ENCODE measurements at regions of chr10 and their contacts with region 1.

Region 1: GRCh38 chr10:91006001-91006751 is 85.3 kb upstream of the ANKRD1 start:
- DNase-seq: peak; percentile 34 to 84 (median 55)
- ATAC-seq: peak; percentile 92
- H3K4me3 ChIP-seq: no peak overlapping the region
- H3K4me3 Mint-ChIP-seq: peak overlapping the region; percentile 47
- H3K27ac ChIP-seq: no peak overlapping the region
- H3K27ac Mint-ChIP-seq: peak overlapping the region; percentile 13
- H3K4me1 ChIP-seq: peaks cover 8% of the 10 kb centered on the region
- H3K4me1 Mint-ChIP-seq: peaks cover 12% of the 10 kb centered on the region
- H3K27me3 ChIP-seq: no peaks in the 10 kb centered on the region
- H3K27me3 Mint-ChIP-seq: no peaks in the 10 kb centered on the region
- CTCF ChIP-seq: peak; percentile 92

Region 2: GRCh38 chr10:90798482-90798881 is 207.7 kb before region 1 on chr10:
- CTCF ChIA-PET with region 1: no interaction called
- POLR2A ChIA-PET with region 1: no interaction called
- intact Hi-C with region 1: no loop called
- DNase-seq: no peak
- ATAC-seq: no peak
- H3K4me3 ChIP-seq: no peak overlapping the region
- H3K4me3 Mint-ChIP-seq: no peak overlapping the region
- H3K27ac ChIP-seq: no peak overlapping the region
- H3K27ac Mint-ChIP-seq: no peak overlapping the region
- H3K4me1 ChIP-seq: no peaks in the 10 kb centered on the region
- H3K4me1 Mint-ChIP-seq: no peaks in the 10 kb centered on the region
- H3K27me3 ChIP-seq: no peaks in the 10 kb centered on the region
- H3K27me3 Mint-ChIP-seq: peaks cover 6% of the 10 kb centered on the region
- CTCF ChIP-seq: no peak

Region 3: DNA sequence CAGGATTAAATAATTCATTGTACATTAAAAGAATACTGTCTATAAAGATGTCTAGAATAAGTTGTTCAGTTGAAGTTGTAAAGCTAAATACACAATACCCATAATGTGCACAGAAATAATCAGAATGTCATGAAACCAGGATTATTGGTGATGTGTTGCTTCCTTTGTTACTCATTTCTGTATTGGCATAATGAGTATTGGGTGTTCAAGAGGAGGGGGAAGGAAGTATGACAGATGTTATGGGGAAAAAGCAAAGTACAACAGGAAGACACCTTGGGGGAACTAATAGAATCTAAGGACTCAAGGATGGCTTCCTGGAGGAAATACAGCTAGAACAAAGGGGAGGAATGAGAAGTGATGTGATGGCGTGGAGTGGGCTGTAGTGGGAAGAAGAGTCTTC is 100.3 kb before region 1 on chr10:
- CTCF ChIA-PET with region 1: no interaction called
- POLR2A ChIA-PET with region 1: no interaction called
- intact Hi-C with region 1: loop called (anchors 1 to 5 kb)
- DNase-seq: no peak
- ATAC-seq: no peak
- H3K4me3 ChIP-seq: no peak overlapping the region
- H3K4me3 Mint-ChIP-seq: no peak overlapping the region
- H3K27ac ChIP-seq: no peak overlapping the region
- H3K27ac Mint-ChIP-seq: no peak overlapping the region
- H3K4me1 ChIP-seq: no peaks in the 10 kb centered on the region
- H3K4me1 Mint-ChIP-seq: no peaks in the 10 kb centered on the region
- H3K27me3 ChIP-seq: no peaks in the 10 kb centered on the region
- H3K27me3 Mint-ChIP-seq: no peaks in the 10 kb centered on the region
- CTCF ChIP-seq: no peak

Region 4: GRCh38 chr10:91088300-91089140 is 82.3 kb after region 1 on chr10:
- CTCF ChIA-PET with region 1: no interaction called
- POLR2A ChIA-PET with region 1: no interaction called
- intact Hi-C with region 1: loop called (anchors 5 to 10 kb)
- DNase-seq: peak in 3 of 14 experiments; percentile 43 to 49 (median 48)
- ATAC-seq: peak; percentile 61
- H3K4me3 ChIP-seq: no peak overlapping the region
- H3K4me3 Mint-ChIP-seq: no peak overlapping the region
- H3K27ac ChIP-seq: no peak overlapping the region
- H3K27ac Mint-ChIP-seq: no peak overlapping the region
- H3K4me1 ChIP-seq: no peaks in the 10 kb centered on the region
- H3K4me1 Mint-ChIP-seq: no peaks in the 10 kb centered on the region
- H3K27me3 ChIP-seq: no peaks in the 10 kb centered on the region
- H3K27me3 Mint-ChIP-seq: no peaks in the 10 kb centered on the region
- CTCF ChIP-seq: peak; percentile 49

Region 5: GRCh38 chr10:91389636-91390512 is 383.7 kb after region 1 on chr10:
- CTCF ChIA-PET with region 1: no interaction called
- POLR2A ChIA-PET with region 1: no interaction called
- intact Hi-C with region 1: loop called in 1 of 2 experiments (anchors 10 kb)
- DNase-seq: peak in 4 of 14 experiments; percentile 31 to 85 (median 80)
- ATAC-seq: peak; percentile 99
- H3K4me3 ChIP-seq: no peak overlapping the region
- H3K4me3 Mint-ChIP-seq: no peak overlapping the region
- H3K27ac ChIP-seq: no peak overlapping the region
- H3K27ac Mint-ChIP-seq: no peak overlapping the region
- H3K4me1 ChIP-seq: no peaks in the 10 kb centered on the region
- H3K4me1 Mint-ChIP-seq: peaks cover 9% of the 10 kb centered on the region
- H3K27me3 ChIP-seq: peaks cover 0 to 10% of the 10 kb centered on the region in 2 experiments
- H3K27me3 Mint-ChIP-seq: peaks cover 28% of the 10 kb centered on the region
- CTCF ChIP-seq: peak; percentile 78

Region 6: DNA sequence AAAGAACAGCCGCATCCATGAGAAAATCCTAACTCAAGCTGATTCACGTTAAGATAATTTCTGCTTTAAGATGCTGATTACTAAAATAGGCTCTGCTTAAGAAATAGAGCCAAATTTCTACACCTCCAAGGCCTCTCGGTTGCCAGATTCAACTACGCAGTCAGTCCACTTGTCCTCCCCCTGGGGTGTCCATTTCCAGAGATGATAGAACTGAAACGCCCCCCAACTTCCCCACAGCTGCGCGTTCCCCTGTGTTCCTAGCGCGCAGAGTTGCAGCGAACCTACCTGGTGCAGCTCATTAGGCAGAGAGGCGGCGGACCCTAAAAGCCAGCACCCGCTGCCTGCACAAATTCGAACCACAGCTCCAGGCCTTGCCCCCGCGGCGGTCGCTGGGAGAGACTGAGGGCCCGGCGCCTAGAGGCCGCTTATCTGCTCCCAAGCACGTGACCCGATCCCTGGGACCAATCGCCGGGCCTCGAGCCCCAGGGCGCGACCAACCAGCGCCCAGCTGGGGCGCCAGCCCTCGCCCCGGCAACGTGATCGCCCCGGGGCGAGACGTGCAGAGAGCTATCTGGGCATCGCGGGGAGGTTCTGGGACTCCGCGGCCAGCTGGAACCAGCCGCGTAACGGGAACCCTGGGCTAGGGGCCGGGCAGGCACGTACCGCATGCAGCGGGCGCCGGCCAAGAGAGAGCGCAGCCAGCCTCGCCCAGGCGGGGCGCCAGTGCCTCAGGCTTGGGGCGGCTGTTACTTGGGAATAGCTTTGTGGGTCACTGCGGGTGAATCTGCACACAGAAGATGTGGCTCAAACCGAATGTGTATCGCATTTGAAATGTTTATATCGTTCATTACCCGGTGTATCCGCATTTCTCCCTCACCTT is 626.7 kb after region 1 on chr10 and contains the start of gene PPP1R3C:
- CTCF ChIA-PET with region 1: interaction called, 8 read pairs
- POLR2A ChIA-PET with region 1: no interaction called
- intact Hi-C with region 1: loop called (anchors 2 to 5 kb)
- DNase-seq: peak in 12 of 14 experiments; percentile 0 to 56 (median 16)
- ATAC-seq: peak; percentile 46
- H3K4me3 ChIP-seq: peak within 1 kb of the TSS; percentile 33
- H3K4me3 Mint-ChIP-seq: peak within 1 kb of the TSS; percentile 49
- H3K27ac ChIP-seq: no peak within 1 kb of the TSS
- H3K27ac Mint-ChIP-seq: no peak within 1 kb of the TSS
- H3K4me1 ChIP-seq: peaks cover 12% of the 10 kb centered on the region
- H3K4me1 Mint-ChIP-seq: peaks cover 4% of the 10 kb centered on the region
- H3K27me3 ChIP-seq: peaks cover 31 to 48% of the 10 kb centered on the region in 2 experiments
- H3K27me3 Mint-ChIP-seq: peaks cover 78% of the 10 kb centered on the region
- CTCF ChIP-seq: no peak
- total RNA-seq, gene PPP1R3C: not detected

Measured in CD4-positive, alpha-beta T cell (primary cell).